Transverse colon (tissue), 4 donors: ENCODE measurements at regions of chr5 and their contacts with region 1.

Region 1: DNA sequence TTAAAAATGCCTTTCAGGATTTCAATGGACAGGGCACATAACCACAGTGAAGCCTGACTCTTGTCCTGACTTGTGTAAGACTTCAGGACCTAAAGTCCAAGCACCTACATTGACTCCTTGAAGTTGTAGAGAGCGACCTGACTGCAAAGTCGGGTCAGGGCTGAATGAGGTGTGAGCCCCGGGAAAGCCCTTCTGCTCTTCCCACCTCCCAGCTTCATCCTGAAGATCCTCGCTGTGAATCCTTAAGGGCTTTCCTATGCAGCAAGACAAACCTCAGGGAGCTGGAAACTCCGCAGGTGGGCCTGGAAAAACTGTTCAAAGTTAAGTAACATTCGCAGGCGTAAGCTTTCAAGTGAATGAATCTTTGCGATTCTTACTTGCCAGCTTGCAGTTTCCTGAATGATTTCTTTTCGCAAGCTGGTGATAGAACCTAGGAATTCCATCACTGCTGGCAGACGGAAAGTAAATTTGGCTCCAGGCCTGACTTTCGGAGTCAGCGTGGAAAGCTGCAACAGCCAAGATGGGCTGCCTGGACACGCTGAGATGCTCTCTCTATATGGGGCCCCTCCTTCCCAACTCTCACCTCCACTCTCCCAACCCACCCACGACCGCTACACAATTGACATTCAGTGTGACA is 10.9 kb downstream of the SEMA5A start:
- DNase-seq: no peak
- H3K4me3 ChIP-seq: no peak overlapping the region
- H3K27ac ChIP-seq: no peak overlapping the region
- H3K4me1 ChIP-seq: peaks cover 0 to 3% (median 0%) of the 10 kb centered on the region in 4 donors
- H3K27me3 ChIP-seq: no peaks in the 10 kb centered on the region
- CTCF ChIP-seq: no peak
- EP300 ChIP-seq: no peak
- POLR2A ChIP-seq: no peak

Region 2: DNA sequence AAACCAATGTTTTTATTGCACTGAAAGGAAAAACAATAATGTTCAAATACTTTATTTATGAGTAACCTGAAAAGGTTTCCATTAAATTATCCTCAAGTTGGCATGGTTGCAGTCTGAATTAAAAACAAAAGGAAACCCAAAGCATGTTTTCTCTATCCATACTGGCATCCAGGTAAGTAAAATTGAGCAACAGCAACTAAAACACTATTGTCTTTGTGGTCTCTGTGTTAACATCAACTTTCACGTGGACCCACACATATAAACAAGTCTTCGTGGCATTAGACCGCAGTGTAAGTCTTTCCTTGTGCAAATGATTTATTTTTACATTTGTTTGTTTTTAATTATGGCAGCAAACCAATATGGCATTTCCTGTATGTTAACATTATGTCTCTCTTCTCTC is 746.8 kb before region 1 on chr5:
- in situ Hi-C with region 1: no loop called
- intact Hi-C with region 1: no loop called
- DNase-seq: no peak
- H3K4me3 ChIP-seq: no peak overlapping the region
- H3K27ac ChIP-seq: no peak overlapping the region
- H3K4me1 ChIP-seq: no peaks in the 10 kb centered on the region
- H3K27me3 ChIP-seq: no peaks in the 10 kb centered on the region
- CTCF ChIP-seq: no peak
- EP300 ChIP-seq: no peak
- POLR2A ChIP-seq: no peak

Region 3: DNA sequence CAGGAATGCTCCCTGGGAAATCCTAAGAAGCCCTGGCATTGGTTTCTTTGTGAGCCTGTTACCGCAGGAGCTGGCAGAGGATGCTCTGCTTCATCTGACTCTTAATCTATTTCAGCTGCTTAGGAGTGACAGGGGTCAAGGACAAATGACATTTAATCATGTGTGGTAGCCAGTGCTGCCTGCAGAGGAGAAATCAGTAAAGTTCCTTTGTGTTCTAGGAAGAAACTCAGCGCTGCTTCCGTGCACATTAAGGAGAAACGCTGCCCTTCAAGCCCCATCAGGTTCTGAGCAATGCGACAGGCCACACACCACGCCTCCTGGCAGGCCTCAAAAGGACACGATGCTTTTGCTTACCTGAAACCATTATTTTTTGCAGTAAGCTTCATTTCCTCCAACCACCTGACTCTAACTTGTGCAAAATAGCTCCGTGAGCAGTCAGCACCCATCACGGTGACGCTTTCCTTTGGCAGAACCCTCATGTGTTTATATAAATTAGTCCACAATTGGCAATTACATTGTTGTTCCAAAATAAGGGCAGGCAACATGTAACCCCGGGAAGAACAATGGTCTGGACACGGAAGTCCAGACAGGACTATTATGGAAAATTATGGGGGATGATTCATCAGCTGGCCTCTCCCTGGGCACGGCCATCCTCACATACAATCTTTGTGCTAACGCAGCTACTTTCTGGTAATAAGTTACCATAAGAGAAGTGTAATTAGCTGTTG is 1614.0 kb after region 1 on chr5:
- in situ Hi-C with region 1: no loop called
- intact Hi-C with region 1: loop called (anchors 5 kb)
- DNase-seq: no peak
- H3K4me3 ChIP-seq: no peak overlapping the region
- H3K27ac ChIP-seq: no peak overlapping the region
- H3K4me1 ChIP-seq: no peaks in the 10 kb centered on the region
- H3K27me3 ChIP-seq: no peaks in the 10 kb centered on the region
- CTCF ChIP-seq: no peak
- EP300 ChIP-seq: no peak
- POLR2A ChIP-seq: no peak